ENCODE measurements at regions of chr5 and their contacts with region 1.

Region 1: DNA sequence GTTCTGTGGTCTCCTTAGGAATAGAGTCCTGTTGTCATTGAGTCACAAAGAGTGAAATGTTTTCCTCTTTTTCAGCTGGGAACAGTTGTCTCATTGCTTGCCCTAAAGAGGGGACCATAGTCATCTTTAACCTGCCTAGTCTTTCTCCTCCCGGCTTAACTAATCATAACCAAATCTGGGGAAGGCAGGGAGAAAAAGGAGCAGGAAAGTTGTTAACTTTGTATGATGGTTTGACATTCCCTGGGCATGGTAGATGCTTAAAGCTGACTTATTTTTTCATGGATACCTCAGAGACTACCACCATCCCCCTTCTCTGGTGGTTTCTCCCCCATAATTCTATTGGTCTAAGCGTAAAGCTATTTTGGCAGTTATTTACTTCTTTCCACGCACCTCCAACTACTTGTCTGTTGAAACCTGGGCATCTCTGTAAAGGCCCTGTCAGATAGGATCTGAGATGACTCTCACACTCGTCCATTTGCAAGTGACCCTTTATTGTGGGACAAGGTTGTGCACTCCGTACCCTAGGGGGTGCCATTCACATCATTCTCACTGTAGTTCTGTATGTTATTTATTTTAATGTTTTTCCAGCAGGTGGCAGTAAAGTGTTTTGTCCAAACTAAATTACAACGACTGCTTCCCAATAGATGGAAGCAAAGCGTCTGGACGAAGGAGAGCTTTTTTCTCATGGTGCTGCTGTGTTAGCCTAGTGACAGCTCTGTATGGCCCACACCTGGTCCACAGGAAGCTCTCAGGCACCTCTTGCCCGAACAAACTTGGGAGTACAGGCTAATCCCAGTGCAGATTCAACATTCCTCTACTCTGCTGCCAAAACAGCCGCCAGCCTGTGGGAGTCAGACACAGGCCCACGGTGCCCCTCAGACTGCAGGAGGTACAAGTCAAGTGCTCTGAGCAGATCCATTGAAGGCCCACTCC is 3.0 kb upstream of the FAM13B start:
- DNase-seq: peak; percentile 92 to 95 (median 93)
- H3K4me3 ChIP-seq: no peak overlapping the region
- H3K27ac ChIP-seq: no peak overlapping the region
- H3K4me1 ChIP-seq: peaks cover 4 to 30% (median 17%) of the 10 kb centered on the region in 4 experiments
- H3K27me3 ChIP-seq: no peaks in the 10 kb centered on the region

Region 2: DNA sequence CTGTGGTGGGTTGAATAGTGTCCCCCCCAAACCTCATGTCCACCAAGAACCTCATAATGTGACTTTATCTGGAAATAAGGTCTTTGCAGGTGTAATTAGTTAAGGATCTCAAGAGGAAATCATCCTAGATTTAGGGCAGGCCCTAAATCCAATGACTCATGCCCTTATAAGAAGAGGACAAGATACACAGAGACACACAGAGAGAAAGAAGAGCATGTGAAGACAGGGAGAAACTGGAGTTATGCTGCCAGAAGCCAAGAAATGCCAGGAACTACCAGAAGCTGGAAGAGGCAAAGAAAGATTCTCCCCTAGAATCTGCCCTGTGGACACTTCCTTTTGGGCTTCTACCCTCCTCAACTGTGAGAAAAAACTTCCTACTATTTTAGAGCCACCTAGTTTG is 11.8 kb before region 1 on chr5:
- CTCF ChIA-PET with region 1: interaction called, 15 read pairs
- POLR2A ChIA-PET with region 1: interaction called, 5 read pairs
- DNase-seq: no peak
- H3K4me3 ChIP-seq: no peak overlapping the region
- H3K27ac ChIP-seq: no peak overlapping the region
- H3K4me1 ChIP-seq: peaks cover 9 to 37% (median 18%) of the 10 kb centered on the region in 4 experiments
- H3K27me3 ChIP-seq: no peaks in the 10 kb centered on the region

Region 3: GRCh38 chr5:138083702-138084101 is 47.8 kb after region 1 on chr5 and contains the start of gene WNT8A:
- CTCF ChIA-PET with region 1: interaction called, 21 read pairs
- POLR2A ChIA-PET with region 1: no interaction called
- DNase-seq: no peak
- H3K4me3 ChIP-seq: no peak within 1 kb of the TSS
- H3K27ac ChIP-seq: no peak within 1 kb of the TSS
- H3K4me1 ChIP-seq: peaks cover 0 to 7% (median 2%) of the 10 kb centered on the region in 4 experiments
- H3K27me3 ChIP-seq: no peaks in the 10 kb centered on the region

Measured in common myeloid progenitor, CD34-positive (primary cell).